ENCODE measurements at regions of chr16 and their contacts with region 1.

Region 1: GRCh38 chr16:18801197-18801972 is at the start of gene ARL6IP1:
- DNase-seq: peak; percentile 100
- ATAC-seq: peak; percentile 96
- H3K4me3 ChIP-seq: peak within 1 kb of the TSS; percentile 76 to 94 (median 85)
- H3K4me3 Mint-ChIP-seq: peak within 1 kb of the TSS; percentile 92
- H3K27ac ChIP-seq: peak within 1 kb of the TSS; percentile 92 to 95
- H3K27ac Mint-ChIP-seq: peak within 1 kb of the TSS; percentile 95
- H3K4me1 ChIP-seq: peaks cover 16 to 21% of the 10 kb centered on the region in 2 donors
- H3K4me1 Mint-ChIP-seq: peaks cover 38% of the 10 kb centered on the region
- H3K27me3 ChIP-seq: no peaks in the 10 kb centered on the region
- H3K27me3 Mint-ChIP-seq: no peaks in the 10 kb centered on the region
- CTCF ChIP-seq: peak; percentile 96
- total RNA-seq, gene ARL6IP1: 106 and 109 TPM in 2 replicates

Region 2: DNA sequence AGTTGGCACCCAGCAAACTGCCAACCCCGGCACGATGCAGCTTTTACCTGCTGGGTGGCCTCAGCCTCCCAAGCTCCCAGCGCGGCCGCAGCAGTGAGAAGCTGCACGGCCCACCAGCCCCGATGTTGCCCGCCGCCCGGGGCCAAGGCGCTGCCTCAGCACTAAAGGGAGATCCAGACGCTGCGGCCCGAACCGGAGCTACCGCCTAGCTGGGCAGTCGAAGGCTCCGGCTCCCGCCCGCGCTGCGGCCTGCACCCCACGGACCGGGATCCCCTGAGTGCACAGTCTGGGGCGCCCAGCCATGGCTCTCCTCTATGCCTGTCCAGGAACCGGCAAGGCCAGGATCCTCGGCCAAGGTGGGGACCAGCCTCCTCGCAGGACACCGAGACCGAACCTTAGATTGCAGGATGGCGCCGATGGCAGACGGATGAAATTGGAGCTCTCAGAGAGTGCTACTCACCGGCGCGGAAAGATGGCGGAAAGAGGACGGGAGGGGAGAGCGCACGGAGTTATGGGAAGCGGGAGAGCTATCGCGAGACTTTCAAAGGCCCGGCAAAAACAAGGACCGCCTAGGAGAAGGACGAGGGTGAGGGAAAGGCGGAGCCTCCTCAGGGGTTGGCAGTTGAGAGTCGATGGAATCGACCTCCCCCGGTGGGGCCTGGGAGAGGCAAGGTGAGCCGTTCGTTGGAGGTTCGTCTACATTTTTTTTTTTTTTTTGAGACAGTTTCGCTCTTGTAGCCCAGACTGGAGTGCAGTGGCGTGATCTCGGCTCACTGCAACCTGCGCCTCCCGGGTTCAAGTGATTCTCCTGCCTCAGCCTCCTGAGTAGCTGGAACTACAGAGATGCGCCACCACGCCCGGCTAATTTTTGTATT is 11.3 kb before region 1 on chr16 and contains the start of gene RPS15A:
- CTCF ChIA-PET with region 1: interaction called, 73 read pairs
- POLR2A ChIA-PET with region 1: interaction called, 28 read pairs
- intact Hi-C with region 1: loop called (anchors 1 kb)
- DNase-seq: peak; percentile 96
- ATAC-seq: peak; percentile 98
- H3K4me3 ChIP-seq: peak within 1 kb of the TSS; percentile 81 to 99 (median 96)
- H3K4me3 Mint-ChIP-seq: peak within 1 kb of the TSS; percentile 99
- H3K27ac ChIP-seq: peak within 1 kb of the TSS; percentile 77 to 79
- H3K27ac Mint-ChIP-seq: peak within 1 kb of the TSS; percentile 90
- H3K4me1 ChIP-seq: peaks cover 20 to 39% of the 10 kb centered on the region in 2 donors
- H3K4me1 Mint-ChIP-seq: peaks cover 44% of the 10 kb centered on the region
- H3K27me3 ChIP-seq: no peaks in the 10 kb centered on the region
- H3K27me3 Mint-ChIP-seq: no peaks in the 10 kb centered on the region
- CTCF ChIP-seq: no peak
- total RNA-seq, gene RPS15A: 2,146 and 2,321 TPM in 2 replicates

Region 3: DNA sequence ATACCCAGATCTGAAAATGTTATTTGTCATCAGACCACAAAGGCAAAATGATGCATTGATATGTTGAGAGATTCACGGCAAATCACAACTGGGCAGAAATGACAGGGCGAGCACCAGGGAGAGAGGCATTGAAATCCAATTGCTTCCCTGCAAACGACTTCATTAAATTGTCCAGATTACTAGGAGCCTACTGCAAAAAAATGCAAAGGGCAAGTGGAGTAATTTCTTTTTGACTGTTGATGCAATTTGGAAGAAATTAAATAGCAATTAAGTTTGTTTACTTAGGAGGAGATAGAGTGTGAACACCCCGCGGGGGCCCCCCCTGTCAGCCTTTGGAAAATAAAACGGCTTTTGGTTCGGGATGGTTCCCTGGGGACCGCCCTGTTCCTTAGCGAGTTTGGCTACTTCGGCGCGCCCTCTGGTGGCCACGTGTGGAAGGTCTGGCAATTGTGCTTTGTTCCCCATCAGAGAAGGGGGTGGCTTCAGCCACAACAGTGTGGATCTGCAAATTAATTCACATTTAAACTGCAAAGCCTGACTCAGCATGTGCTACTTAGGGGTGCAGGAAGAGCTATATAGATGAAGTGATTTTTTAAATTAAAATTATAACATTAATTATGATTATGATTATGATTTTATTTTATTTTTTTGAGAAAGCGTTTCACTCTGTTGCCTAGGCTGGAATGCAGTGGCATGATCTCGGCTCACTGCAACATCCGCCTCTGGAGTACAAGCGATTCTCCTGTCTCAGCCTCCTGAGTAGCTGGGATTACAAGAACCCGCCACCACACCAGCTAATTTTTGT is 167.9 kb after region 1 on chr16:
- CTCF ChIA-PET with region 1: interaction called, 22 read pairs
- POLR2A ChIA-PET with region 1: no interaction called
- intact Hi-C with region 1: loop called (anchors 1 kb)
- DNase-seq: peak; percentile 80
- ATAC-seq: peak; percentile 85
- H3K4me3 ChIP-seq: peak overlapping the region in 4 of 5 experiments; percentile 19 to 49 (median 37)
- H3K4me3 Mint-ChIP-seq: peak overlapping the region; percentile 5
- H3K27ac ChIP-seq: no peak overlapping the region
- H3K27ac Mint-ChIP-seq: no peak overlapping the region
- H3K4me1 ChIP-seq: peaks cover 4 to 5% of the 10 kb centered on the region in 2 donors
- H3K4me1 Mint-ChIP-seq: peaks cover 3% of the 10 kb centered on the region
- H3K27me3 ChIP-seq: peaks cover 0 to 3% (median 0%) of the 10 kb centered on the region in 4 experiments
- H3K27me3 Mint-ChIP-seq: no peaks in the 10 kb centered on the region
- CTCF ChIP-seq: peak; percentile 96

Region 4: GRCh38 chr16:19014461-19014860 is 213.1 kb after region 1 on chr16:
- CTCF ChIA-PET with region 1: no interaction called
- POLR2A ChIA-PET with region 1: no interaction called
- intact Hi-C with region 1: no loop called
- DNase-seq: no peak
- ATAC-seq: no peak
- H3K4me3 ChIP-seq: no peak overlapping the region
- H3K4me3 Mint-ChIP-seq: no peak overlapping the region
- H3K27ac ChIP-seq: no peak overlapping the region
- H3K27ac Mint-ChIP-seq: no peak overlapping the region
- H3K4me1 ChIP-seq: no peaks in the 10 kb centered on the region
- H3K4me1 Mint-ChIP-seq: no peaks in the 10 kb centered on the region
- H3K27me3 ChIP-seq: no peaks in the 10 kb centered on the region
- H3K27me3 Mint-ChIP-seq: peaks cover 6% of the 10 kb centered on the region
- CTCF ChIP-seq: no peak

Region 5: GRCh38 chr16:19067349-19068236 is 266.2 kb after region 1 on chr16 and contains the start of gene COQ7:
- CTCF ChIA-PET with region 1: interaction called, 11 read pairs
- POLR2A ChIA-PET with region 1: no interaction called
- intact Hi-C with region 1: no loop called
- DNase-seq: peak; percentile 100
- ATAC-seq: peak; percentile 90
- H3K4me3 ChIP-seq: peak within 1 kb of the TSS; percentile 78 to 91 (median 79)
- H3K4me3 Mint-ChIP-seq: peak within 1 kb of the TSS; percentile 91
- H3K27ac ChIP-seq: peak within 1 kb of the TSS; percentile 99 to 100
- H3K27ac Mint-ChIP-seq: peak within 1 kb of the TSS; percentile 99
- H3K4me1 ChIP-seq: peaks cover 8 to 14% of the 10 kb centered on the region in 2 donors
- H3K4me1 Mint-ChIP-seq: peaks cover 14% of the 10 kb centered on the region
- H3K27me3 ChIP-seq: no peaks in the 10 kb centered on the region
- H3K27me3 Mint-ChIP-seq: peaks cover 8% of the 10 kb centered on the region
- CTCF ChIP-seq: no peak
- total RNA-seq, gene COQ7: 19.4 and 19.5 TPM in 2 replicates

Region 6: DNA sequence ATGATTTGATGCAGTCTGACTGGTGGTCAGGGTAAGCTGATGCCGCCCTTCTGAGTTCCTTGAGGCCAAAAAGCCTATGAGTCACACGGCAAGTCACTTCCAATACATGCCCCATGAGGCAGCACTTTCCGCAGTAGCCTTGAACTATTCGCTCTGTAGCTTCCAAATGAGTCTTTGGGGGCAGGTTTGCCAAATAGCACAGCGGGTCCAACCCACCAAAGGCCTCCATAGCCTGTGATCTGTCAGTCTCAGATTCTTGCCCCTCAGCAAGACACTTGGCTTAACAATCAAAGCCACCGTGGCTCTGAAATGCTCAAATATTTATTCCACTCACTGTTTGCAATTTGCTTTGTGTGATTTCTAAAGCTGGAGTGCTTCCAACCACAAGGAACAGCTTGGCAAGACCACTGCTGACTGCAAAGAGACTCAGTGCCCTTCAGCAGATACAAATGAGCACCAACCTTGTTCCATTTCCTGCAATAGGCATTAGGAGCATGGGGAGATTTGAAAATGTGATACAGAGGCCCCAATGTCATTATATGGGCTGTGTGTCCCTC is 529.5 kb after region 1 on chr16:
- CTCF ChIA-PET with region 1: no interaction called
- POLR2A ChIA-PET with region 1: no interaction called
- intact Hi-C with region 1: no loop called
- DNase-seq: no peak
- ATAC-seq: no peak
- H3K4me3 ChIP-seq: no peak overlapping the region
- H3K4me3 Mint-ChIP-seq: no peak overlapping the region
- H3K27ac ChIP-seq: no peak overlapping the region
- H3K27ac Mint-ChIP-seq: no peak overlapping the region
- H3K4me1 ChIP-seq: no peaks in the 10 kb centered on the region
- H3K4me1 Mint-ChIP-seq: no peaks in the 10 kb centered on the region
- H3K27me3 ChIP-seq: no peaks in the 10 kb centered on the region
- H3K27me3 Mint-ChIP-seq: peaks cover 3% of the 10 kb centered on the region
- CTCF ChIP-seq: no peak

Region 7: DNA sequence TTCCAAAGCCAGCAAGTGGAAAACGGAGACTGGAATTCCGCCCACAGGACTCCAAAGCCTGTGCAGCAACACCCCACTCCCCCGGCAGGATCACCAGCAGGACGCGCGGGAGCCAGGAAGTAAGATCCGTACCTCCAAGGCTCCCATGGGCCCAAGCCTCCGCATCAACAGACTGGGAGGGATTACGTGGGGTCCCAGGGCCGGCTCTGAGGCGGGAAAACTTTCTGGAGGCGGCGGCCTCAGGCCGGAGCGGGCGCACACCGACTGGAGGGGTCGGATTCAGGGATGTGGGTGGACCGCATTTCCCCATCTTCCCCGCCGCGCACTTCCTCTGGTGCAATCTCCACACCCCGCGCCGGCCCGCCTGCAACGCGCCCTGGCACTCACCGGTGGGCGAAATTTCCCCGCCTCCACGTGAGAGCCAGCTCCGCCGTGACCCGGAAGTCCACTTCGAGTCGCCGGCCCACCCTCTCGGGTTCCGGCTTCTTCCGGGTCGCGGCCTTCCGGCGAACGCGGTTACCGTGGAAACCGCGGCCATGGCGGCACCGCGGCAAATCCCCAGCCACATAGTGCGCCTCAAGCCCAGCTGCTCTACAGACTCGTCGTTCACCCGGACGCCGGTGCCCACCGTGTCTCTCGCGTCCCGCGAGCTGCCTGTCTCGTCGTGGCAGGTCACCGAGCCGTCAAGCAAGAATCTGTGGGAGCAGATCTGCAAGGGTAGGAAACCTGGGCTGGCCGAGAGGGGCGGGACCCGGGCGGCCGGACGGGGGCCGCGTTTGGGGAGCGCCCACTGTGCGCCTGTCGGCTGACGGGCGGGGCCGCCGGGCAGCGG is 916.6 kb after region 1 on chr16 and contains the starts of genes IQCK and KNOP1:
- CTCF ChIA-PET with region 1: no interaction called
- POLR2A ChIA-PET with region 1: no interaction called
- intact Hi-C with region 1: loop called (anchors 5 kb)
- DNase-seq: peak; percentile 94
- ATAC-seq: peak; percentile 93
- H3K4me3 ChIP-seq: peak within 1 kb of the TSS; percentile 68 to 99 (median 89)
- H3K4me3 Mint-ChIP-seq: peak within 1 kb of the TSS; percentile 93
- H3K27ac ChIP-seq: peak within 1 kb of the TSS in 1 of 2 donors; percentile 52
- H3K27ac Mint-ChIP-seq: peak within 1 kb of the TSS; percentile 81
- H3K4me1 ChIP-seq: peaks cover 11 to 13% of the 10 kb centered on the region in 2 donors
- H3K4me1 Mint-ChIP-seq: peaks cover 19% of the 10 kb centered on the region
- H3K27me3 ChIP-seq: no peaks in the 10 kb centered on the region
- H3K27me3 Mint-ChIP-seq: no peaks in the 10 kb centered on the region
- CTCF ChIP-seq: no peak
- total RNA-seq, gene IQCK: 3.0 and 4.3 TPM in 2 replicates
- total RNA-seq, gene KNOP1: 12.0 and 16.9 TPM in 2 replicates